PC-9 (cell line): ENCODE measurements at regions of chr6 and their contacts with region 1.

Region 1: DNA sequence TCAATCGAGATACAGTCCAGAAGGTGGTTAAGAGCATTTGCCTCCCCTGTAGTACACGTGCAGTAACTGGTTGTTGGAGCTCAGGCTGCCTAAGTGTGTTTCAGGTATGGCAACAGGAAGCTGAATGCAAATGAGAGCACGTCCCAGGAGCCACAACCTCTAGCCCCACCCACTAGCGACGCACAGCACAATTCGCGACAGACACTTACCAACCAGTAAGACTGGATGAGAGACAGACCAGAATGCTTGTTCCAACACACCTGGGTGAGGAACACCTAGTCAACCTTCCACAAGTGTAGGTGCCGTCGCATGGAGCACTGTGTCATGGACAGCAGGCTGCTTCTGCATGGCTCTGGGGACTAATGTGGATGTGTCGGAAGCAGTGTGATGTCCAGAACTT is 7.2 kb upstream of the SERPINB1 start:
- DNase-seq: no peak
- H3K4me3 ChIP-seq: no peak overlapping the region
- H3K27ac ChIP-seq: no peak overlapping the region
- H3K4me1 ChIP-seq: peaks cover 29% of the 10 kb centered on the region
- H3K27me3 ChIP-seq: no peaks in the 10 kb centered on the region
- CTCF ChIP-seq: no peak

Region 2: DNA sequence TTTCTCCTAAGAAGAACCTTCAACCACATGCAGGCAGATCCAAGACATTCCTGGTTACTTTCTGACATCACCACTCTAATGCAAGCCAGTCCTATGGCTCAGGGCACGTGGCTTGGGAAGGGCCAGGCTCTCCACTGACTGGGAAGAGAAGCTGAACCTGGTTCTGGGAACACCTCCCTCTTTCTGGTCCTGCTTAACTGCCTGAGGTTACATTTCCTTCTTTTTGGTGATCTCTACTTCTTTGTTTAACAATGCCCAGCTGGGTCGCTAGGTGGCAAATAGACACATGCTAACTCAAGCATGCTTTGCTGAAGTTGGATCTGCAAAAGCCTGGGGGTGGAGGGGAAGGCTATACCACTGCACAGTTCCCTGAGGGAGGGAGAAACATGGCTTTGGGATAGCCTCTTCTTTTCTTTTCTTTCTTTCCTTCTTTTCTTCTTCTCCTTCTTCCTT is 853.2 kb before region 1 on chr6:
- CTCF ChIA-PET with region 1: no interaction called
- POLR2A ChIA-PET with region 1: no interaction called
- intact Hi-C with region 1: no loop called
- DNase-seq: no peak
- H3K4me3 ChIP-seq: no peak overlapping the region
- H3K27ac ChIP-seq: no peak overlapping the region
- H3K4me1 ChIP-seq: no peaks in the 10 kb centered on the region
- H3K27me3 ChIP-seq: no peaks in the 10 kb centered on the region
- CTCF ChIP-seq: no peak

Region 3: DNA sequence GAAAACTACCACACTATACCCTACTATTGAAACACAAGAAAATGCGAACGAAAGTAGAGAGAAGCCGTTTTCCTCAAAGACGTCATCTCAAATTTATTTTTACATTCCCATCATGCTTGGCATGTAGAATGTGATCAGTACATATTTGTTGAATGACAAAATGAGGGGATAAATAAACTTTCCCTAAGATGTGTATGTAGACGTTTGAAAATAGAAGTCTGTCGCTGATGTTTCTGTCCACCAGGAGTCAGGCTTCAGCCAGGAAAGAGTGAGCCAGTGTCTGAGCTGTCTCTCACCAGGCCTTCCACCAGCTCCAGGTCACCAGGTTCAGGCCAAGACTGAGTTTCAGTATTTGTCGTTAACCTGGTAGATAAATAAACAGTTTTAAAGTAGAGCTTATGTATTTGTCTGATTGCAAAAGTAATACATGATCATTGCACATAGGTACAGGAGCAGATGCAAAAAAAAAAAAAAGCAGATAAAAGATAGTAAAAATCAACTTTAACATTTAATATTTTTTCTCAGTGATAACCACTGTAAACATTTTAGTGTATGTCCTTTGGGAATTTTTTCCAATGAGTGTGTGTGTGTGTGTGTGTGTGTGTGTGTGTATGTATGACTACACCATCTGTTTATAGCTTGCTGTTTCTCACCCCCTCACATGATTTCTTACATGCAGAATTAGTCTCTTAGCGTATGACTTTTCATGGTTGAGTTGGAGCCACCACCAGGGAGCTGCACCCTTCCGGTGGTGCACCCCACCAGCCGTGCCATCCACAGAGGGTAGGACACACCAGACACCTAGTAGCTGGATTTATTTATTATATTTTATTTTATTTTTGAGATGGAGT is 57.5 kb before region 1 on chr6:
- CTCF ChIA-PET with region 1: interaction called, 14 read pairs
- POLR2A ChIA-PET with region 1: interaction called, 3 read pairs
- intact Hi-C with region 1: loop called (anchors 1 kb)
- DNase-seq: peak; percentile 71
- H3K4me3 ChIP-seq: no peak overlapping the region
- H3K27ac ChIP-seq: peak overlapping the region; percentile 74
- H3K4me1 ChIP-seq: peaks cover 4% of the 10 kb centered on the region; the same call in 1 of the 2 replicates
- H3K27me3 ChIP-seq: no peaks in the 10 kb centered on the region
- CTCF ChIP-seq: peak; percentile 80

Region 4: DNA sequence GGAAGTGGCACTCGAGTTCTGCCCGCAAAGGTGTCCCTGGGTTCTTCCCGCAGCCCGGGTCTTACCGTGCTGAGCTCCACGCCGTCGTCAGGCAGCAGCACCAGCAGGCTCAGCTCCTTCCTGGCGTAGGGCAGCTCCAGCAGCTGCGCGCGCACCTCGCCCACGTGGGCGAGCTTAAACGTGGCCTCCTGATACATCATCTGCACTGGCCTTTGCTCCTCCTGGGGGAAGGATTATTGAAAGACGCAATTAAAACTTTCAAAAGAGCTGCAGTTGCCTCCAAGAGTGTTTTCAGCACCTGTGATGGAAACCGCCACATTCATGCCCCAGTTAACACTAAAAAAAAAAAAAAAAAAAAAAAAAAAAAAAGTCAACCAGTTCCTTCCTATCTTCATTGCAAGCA is 42.9 kb after region 1 on chr6:
- CTCF ChIA-PET with region 1: interaction called, 13 read pairs
- POLR2A ChIA-PET with region 1: no interaction called
- intact Hi-C with region 1: no loop called
- DNase-seq: no peak
- H3K4me3 ChIP-seq: no peak overlapping the region
- H3K27ac ChIP-seq: no peak overlapping the region
- H3K4me1 ChIP-seq: no peaks in the 10 kb centered on the region
- H3K27me3 ChIP-seq: no peaks in the 10 kb centered on the region
- CTCF ChIP-seq: no peak

Region 5: DNA sequence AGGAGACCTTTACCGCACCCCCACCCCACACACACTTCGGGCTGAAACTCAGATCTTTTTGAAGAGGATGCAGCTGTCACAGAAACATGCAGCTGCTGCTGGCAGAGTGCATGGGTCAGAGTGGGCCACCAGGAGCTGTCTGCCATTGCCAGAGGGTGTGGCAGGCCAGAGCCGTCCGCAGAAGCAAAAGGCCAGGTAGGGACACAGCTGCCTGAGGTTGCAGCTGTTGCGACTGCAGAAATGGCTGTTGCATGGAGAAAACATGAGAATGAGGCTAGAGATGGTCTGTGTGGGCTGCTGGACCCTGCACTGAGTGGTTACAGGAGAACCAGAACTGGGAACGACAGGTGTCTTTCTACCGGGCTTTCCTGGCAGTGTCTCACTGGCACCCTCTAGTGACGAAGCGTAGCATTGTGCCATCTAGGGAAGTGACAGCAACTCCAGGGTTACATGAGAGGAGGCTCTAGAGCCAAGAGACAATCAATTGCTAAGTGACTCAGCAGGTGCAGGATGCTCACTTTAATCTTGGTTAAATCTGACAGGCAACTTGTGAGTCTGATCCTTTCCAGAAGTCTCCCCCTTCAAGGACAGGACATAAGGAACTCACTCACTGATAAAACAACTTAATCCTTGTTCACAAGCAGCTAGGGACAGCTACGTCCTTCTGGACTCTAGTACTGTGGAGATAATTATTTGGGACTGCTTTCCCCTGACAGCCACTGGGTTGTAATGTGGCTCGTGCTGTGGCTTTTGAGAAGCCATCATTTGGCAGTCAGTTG is 83.3 kb after region 1 on chr6:
- CTCF ChIA-PET with region 1: interaction called, 12 read pairs
- POLR2A ChIA-PET with region 1: interaction called, 3 read pairs
- intact Hi-C with region 1: loop called (anchors 1 kb)
- DNase-seq: peak; percentile 70 to 84
- H3K4me3 ChIP-seq: no peak overlapping the region
- H3K27ac ChIP-seq: peak overlapping the region; percentile 46
- H3K4me1 ChIP-seq: peaks cover 3% of the 10 kb centered on the region; the same call in 1 of the 2 replicates
- H3K27me3 ChIP-seq: no peaks in the 10 kb centered on the region
- CTCF ChIP-seq: peak; percentile 83